Right cardiac atrium (tissue), 5 donors: ENCODE measurements at regions of chr4 and their contacts with region 1.

Region 1: GRCh38 chr4:25925486-25926201 is 11.6 kb downstream of the SMIM20 start:
- DNase-seq: peak in 2 of 3 donors; percentile 35 to 76
- ATAC-seq: peak; percentile 36 to 39
- H3K4me3 ChIP-seq: no peak overlapping the region
- H3K27ac ChIP-seq: no peak overlapping the region
- H3K4me1 ChIP-seq: peaks cover 15% of the 10 kb centered on the region
- H3K27me3 ChIP-seq: no peaks in the 10 kb centered on the region

Region 2: DNA sequence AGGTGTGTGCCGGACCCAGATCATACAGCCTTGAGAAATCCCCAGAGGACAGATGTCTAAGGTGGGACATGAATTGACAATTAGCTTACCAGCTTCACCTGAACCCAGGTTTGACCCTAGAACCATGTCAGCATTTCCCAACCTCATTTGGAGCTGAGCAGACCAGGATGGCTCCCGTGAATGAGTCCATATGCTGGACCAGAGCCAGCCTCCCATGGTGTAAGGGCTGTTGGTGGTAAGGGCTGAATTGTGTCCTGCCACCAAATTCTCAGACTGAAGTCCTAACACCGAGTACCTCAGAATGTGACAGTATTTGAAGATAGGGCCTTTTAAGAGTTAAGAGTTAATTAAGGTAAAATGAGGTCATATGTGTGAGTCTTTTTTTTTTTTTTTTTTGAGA is 181.7 kb before region 1 on chr4:
- intact Hi-C with region 1: no loop called
- DNase-seq: no peak
- ATAC-seq: no peak
- H3K4me3 ChIP-seq: no peak overlapping the region
- H3K27ac ChIP-seq: no peak overlapping the region
- H3K4me1 ChIP-seq: no peaks in the 10 kb centered on the region
- H3K27me3 ChIP-seq: no peaks in the 10 kb centered on the region

Region 3: GRCh38 chr4:25986807-25987206 is 61.2 kb after region 1 on chr4:
- intact Hi-C with region 1: loop called in 1 of 4 experiments (anchors 5 kb)
- DNase-seq: no peak
- ATAC-seq: no peak
- H3K4me3 ChIP-seq: no peak overlapping the region
- H3K27ac ChIP-seq: no peak overlapping the region
- H3K4me1 ChIP-seq: no peaks in the 10 kb centered on the region
- H3K27me3 ChIP-seq: no peaks in the 10 kb centered on the region